OCI-LY7 (cell line): ENCODE measurements at regions of chr9 and their contacts with region 1.

Region 1: DNA sequence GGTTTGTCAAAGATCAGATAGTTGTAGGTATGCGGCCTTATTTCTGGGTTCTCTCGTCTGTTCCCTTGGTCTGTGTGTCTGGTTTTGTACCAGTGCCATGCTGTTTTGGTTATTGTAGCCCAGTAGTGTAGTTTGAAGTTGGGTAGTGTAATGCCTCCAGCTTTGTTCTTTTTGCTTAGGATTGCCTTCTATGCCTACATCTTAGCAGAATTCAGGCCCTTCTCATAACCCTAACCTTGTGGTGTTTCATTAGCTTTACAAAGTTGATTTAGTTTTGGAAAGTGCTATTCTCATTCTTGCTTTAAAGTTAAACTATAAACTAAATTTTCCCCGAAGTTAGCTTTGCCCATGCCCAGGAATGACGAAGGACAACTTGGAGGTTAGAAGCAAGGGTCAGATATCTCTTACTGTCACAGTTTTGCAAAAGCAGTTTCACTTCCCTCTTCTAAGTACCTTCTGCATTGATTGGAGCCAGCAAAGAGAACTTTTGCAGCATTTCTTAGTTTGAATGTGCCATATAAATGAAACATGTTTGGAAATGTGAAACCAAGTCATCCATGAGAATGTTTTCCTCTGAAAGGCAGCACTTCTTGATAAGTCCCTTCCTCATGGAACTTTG is 274.3 kb upstream of the DMRT1 start:
- DNase-seq: peak; percentile 86
- H3K4me3 ChIP-seq: peak overlapping the region; percentile 70
- H3K27ac ChIP-seq: peak overlapping the region; percentile 96
- H3K4me1 ChIP-seq: peaks cover 99% of the 10 kb centered on the region
- CTCF ChIP-seq: no peak

Region 2: GRCh38 chr9:272251-273213 is 294.7 kb before region 1 on chr9:
- CTCF ChIA-PET with region 1: no interaction called
- POLR2A ChIA-PET with region 1: interaction called, 3 read pairs
- intact Hi-C with region 1: loop called (anchors 5 kb)
- DNase-seq: peak; percentile 91
- H3K4me3 ChIP-seq: peak overlapping the region; percentile 74
- H3K27ac ChIP-seq: peak overlapping the region; percentile 94
- H3K4me1 ChIP-seq: peaks cover 26% of the 10 kb centered on the region
- CTCF ChIP-seq: no peak

Region 3: GRCh38 chr9:650362-650761 is 83.1 kb after region 1 on chr9:
- CTCF ChIA-PET with region 1: no interaction called
- POLR2A ChIA-PET with region 1: interaction called, 4 read pairs
- intact Hi-C with region 1: loop called (anchors 5 kb)
- DNase-seq: peak; percentile 81
- H3K4me3 ChIP-seq: peak overlapping the region; percentile 65
- H3K27ac ChIP-seq: peak overlapping the region; percentile 69
- H3K4me1 ChIP-seq: peaks cover 71% of the 10 kb centered on the region
- CTCF ChIP-seq: no peak